Activated CD4-positive, alpha-beta memory T cell treated with anti-CD3 and anti-CD28 coated beads for 36 hours (primary cell): ENCODE measurements at regions of chr3 and their contacts with region 1.

Region 1: GRCh38 chr3:65963787-65964677 is 74.7 kb downstream of the MAGI1 start:
- DNase-seq: peak; percentile 78
- H3K4me3 Mint-ChIP-seq: no peak overlapping the region
- H3K27ac Mint-ChIP-seq: peak overlapping the region; percentile 86
- H3K4me1 Mint-ChIP-seq: peaks cover 10% of the 10 kb centered on the region
- H3K27me3 Mint-ChIP-seq: peaks cover 7% of the 10 kb centered on the region

Region 2: GRCh38 chr3:65894679-65895453 is 69.2 kb before region 1 on chr3:
- CTCF ChIA-PET with region 1: no interaction called
- POLR2A ChIA-PET with region 1: no interaction called
- intact Hi-C with region 1: no loop called
- DNase-seq: no peak
- H3K4me3 Mint-ChIP-seq: no peak overlapping the region
- H3K27ac Mint-ChIP-seq: no peak overlapping the region
- H3K4me1 Mint-ChIP-seq: no peaks in the 10 kb centered on the region
- H3K27me3 Mint-ChIP-seq: no peaks in the 10 kb centered on the region

Region 3: DNA sequence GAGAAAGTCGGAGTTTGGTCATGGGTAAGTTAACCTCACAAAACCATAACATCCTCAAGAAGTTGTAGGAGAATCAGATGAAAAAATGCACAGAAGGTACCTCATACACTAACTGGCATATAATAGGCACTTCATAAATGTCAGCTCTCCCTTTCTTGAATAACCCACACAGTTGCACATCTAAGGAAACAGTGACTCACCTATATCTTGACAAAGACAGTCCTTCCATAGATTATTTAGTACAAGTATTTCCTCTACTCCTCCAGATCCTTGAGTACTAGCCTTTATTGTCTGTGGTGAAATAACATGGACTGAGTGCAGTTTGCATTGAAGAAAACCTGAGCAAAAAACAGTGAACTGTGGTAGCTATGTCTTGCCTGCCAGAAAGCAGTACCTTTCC is 28.1 kb after region 1 on chr3:
- CTCF ChIA-PET with region 1: no interaction called
- POLR2A ChIA-PET with region 1: no interaction called
- intact Hi-C with region 1: loop called (anchors 2 kb)
- DNase-seq: no peak
- H3K4me3 Mint-ChIP-seq: no peak overlapping the region
- H3K27ac Mint-ChIP-seq: no peak overlapping the region
- H3K4me1 Mint-ChIP-seq: no peaks in the 10 kb centered on the region
- H3K27me3 Mint-ChIP-seq: peaks cover 4% of the 10 kb centered on the region

Region 4: DNA sequence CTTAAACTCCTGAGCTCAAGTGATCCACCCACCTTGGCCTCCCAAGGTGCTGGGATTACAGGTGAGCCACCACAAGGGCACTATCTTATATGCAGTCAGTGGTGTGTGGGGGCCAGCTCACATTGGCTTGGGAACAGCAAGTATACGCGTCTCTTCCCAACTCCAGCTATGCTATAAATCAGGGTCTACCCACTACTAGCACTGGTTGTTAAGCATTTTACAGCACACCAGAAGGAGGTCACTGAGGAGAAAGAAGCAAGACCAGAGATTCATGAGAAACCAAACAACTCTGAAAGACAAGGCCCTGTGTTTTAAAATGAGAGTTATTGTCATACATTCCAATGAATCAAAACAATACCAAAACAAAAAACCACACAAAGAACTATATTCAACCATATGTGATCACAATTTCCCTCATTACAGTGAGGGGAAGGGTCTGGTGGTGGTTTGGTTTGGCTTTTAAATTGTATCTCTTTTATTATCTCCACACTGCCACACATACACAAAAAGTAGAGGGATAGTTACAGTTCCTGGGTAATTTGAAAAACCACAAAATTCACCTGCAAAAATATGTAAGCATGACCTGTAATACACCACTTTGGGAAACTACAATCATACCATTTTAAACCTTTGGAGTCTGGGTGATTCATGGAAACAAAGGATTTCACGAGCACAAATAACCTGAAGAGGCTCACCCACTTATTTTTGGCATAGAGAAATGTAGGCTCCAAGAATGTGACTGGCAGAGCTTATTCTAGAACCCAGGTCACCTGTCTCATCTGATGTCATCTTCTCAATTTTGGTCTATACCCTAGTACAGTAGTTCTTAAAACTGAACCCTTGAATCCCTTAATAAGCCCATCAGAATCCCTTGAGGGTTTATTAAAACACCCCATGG is 69.5 kb after region 1 on chr3:
- CTCF ChIA-PET with region 1: no interaction called
- POLR2A ChIA-PET with region 1: no interaction called
- intact Hi-C with region 1: loop called (anchors 1 kb)
- DNase-seq: no peak
- H3K4me3 Mint-ChIP-seq: no peak overlapping the region
- H3K27ac Mint-ChIP-seq: no peak overlapping the region
- H3K4me1 Mint-ChIP-seq: peaks cover 18% of the 10 kb centered on the region
- H3K27me3 Mint-ChIP-seq: peaks cover 36% of the 10 kb centered on the region